Activated naive CD4-positive, alpha-beta T cell treated with anti-CD3 and anti-CD28 coated beads for 36 hours (primary cell): ENCODE measurements at regions of chr9 and their contacts with region 1.

Region 1: GRCh38 chr9:76490249-76490990 is 31.4 kb downstream of the GCNT1 start:
- DNase-seq: no peak
- H3K4me3 Mint-ChIP-seq: no peak overlapping the region
- H3K27ac Mint-ChIP-seq: no peak overlapping the region
- H3K4me1 Mint-ChIP-seq: no peaks in the 10 kb centered on the region
- H3K27me3 Mint-ChIP-seq: no peaks in the 10 kb centered on the region

Region 2: GRCh38 chr9:76245518-76245917 is 244.9 kb before region 1 on chr9:
- CTCF ChIA-PET with region 1: no interaction called
- intact Hi-C with region 1: loop called (anchors 10 kb)
- DNase-seq: no peak
- H3K4me3 Mint-ChIP-seq: no peak overlapping the region
- H3K27ac Mint-ChIP-seq: no peak overlapping the region
- H3K4me1 Mint-ChIP-seq: no peaks in the 10 kb centered on the region
- H3K27me3 Mint-ChIP-seq: no peaks in the 10 kb centered on the region

Region 3: GRCh38 chr9:76502746-76503145 is 12.3 kb after region 1 on chr9:
- CTCF ChIA-PET with region 1: no interaction called
- intact Hi-C with region 1: no loop called
- DNase-seq: no peak
- H3K4me3 Mint-ChIP-seq: no peak overlapping the region
- H3K27ac Mint-ChIP-seq: no peak overlapping the region
- H3K4me1 Mint-ChIP-seq: no peaks in the 10 kb centered on the region
- H3K27me3 Mint-ChIP-seq: no peaks in the 10 kb centered on the region

Region 4: DNA sequence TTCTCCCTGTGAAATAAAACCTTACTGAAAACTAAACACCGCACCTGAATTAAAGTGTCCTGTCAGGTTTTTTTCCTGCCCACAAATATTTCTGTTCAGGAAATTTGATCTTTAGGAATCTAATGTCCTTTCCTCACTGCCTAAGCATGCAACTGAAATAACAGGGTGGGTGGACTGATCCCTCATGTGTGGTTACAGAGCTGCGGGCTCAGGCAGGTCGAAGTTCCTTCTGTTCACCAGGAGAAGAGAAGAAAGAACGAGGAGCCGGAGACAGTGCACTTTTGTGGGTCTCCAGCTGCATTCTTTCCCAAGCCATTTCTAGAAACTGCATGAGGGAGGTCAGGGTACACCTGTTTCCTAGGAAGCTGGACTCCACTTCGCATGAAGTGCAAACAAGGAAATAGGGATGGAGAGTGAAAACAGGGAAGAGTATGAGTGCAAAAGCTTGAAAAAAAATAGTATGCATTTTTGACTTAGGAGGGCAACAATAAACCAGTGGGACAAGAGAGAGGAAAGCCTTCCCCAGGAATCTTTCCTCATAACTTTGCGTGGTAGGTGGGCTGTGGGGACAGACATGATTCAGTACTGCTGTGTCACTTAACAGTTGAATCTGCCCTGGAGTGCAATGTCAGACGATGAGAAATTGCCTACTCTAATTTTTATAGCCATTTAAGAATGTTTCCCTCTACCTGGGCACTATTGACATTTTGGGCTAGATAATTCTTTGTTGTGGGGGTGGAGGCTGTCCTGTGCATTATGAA is 28.8 kb after region 1 on chr9:
- CTCF ChIA-PET with region 1: no interaction called
- intact Hi-C with region 1: no loop called
- DNase-seq: no peak
- H3K4me3 Mint-ChIP-seq: no peak overlapping the region
- H3K27ac Mint-ChIP-seq: no peak overlapping the region
- H3K4me1 Mint-ChIP-seq: no peaks in the 10 kb centered on the region
- H3K27me3 Mint-ChIP-seq: peaks cover under 1% of the 10 kb centered on the region